Endothelial cell of umbilical vein (primary cell): ENCODE measurements at regions of chr10 and their contacts with region 1.

Region 1: DNA sequence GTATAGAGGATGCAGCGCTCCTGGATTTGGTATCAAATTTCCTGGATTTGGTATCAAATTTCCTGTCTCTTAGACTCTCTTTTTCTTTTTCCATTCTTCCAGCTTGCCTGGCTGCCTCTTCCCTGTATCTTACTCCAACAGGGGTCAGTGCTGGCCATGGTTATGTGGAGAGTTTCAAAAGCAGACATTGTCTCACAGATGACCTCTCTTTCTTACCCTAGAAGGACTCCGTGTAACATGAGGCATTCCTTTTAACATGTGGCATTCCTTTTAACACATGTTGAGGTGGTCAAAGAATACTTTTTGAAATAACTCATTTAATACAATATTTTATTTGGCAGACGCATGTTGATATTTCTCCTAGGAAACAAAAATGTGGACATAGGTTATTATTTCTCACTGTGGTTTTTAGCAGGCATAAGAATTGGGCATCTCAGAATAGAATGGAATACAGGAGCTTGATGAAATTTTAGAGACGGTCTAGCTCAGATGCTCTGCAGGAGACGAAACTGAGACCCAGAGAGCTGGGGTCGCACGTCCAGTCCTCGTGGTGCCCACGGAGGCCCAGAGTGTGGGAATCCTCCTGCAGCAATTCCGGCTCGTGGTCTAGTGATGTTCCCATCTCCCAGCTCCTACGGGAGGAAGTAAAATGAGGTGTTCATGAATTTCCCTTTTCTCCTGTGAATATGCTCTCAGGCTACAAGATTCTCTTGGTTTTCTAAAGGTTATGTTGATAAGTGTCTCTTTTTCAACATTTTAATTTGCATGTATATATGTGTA is 59.6 kb upstream of the PITRM1 start:
- DNase-seq: no peak
- H3K4me3 ChIP-seq: no peak overlapping the region
- H3K27ac ChIP-seq: no peak overlapping the region
- H3K4me1 ChIP-seq: peaks cover 3% of the 10 kb centered on the region
- H3K27me3 ChIP-seq: peaks cover 0 to 2% of the 10 kb centered on the region in 2 experiments
- CTCF ChIP-seq: no peak
- POLR2A ChIP-seq: no peak

Region 2: DNA sequence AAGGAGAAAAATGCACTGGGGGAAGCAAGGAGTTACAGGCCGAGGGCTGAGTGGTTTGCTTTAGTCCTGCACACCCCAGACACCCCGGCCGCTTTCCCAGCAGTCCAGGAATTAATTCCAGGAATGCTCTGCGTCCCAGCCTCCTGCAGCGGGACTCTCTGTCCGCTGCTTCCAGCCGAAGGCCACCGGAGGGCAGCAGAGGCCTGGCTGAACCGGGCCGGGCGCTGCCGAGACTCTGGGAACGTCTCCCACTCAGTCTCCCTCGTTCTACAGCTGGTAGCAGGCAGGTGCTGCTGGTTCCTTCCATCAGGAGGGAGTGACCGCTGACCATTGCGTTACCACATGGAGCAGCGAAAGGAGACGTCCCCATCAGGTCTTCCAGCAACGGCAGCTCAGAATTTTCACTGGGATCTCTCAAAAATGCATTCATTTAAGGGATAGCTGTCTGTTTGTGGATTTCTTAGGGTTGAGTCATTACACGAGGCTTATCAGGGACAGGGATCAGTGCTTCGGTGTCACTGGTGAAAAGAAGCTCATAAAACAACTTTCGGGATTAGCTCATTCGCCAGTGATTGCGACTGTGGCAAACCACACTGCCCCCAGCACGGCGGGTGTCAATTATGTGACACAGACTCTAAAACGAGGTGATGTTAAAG is 34.7 kb before region 1 on chr10:
- CTCF ChIA-PET with region 1: interaction called, 5 read pairs
- POLR2A ChIA-PET with region 1: no interaction called
- dilution Hi-C with region 1: no loop called
- intact Hi-C with region 1: loop called (anchors 1 kb)
- DNase-seq: peak; percentile 86
- H3K4me3 ChIP-seq: peak overlapping the region in 2 of 3 experiments; percentile 1 to 6
- H3K27ac ChIP-seq: no peak overlapping the region
- H3K4me1 ChIP-seq: peaks cover 12% of the 10 kb centered on the region
- H3K27me3 ChIP-seq: peaks cover 0 to 6% of the 10 kb centered on the region in 2 experiments
- CTCF ChIP-seq: peak; percentile 93 to 96
- POLR2A ChIP-seq: no peak